ENCODE measurements at regions of chr12 and their contacts with region 1.

Region 1: DNA sequence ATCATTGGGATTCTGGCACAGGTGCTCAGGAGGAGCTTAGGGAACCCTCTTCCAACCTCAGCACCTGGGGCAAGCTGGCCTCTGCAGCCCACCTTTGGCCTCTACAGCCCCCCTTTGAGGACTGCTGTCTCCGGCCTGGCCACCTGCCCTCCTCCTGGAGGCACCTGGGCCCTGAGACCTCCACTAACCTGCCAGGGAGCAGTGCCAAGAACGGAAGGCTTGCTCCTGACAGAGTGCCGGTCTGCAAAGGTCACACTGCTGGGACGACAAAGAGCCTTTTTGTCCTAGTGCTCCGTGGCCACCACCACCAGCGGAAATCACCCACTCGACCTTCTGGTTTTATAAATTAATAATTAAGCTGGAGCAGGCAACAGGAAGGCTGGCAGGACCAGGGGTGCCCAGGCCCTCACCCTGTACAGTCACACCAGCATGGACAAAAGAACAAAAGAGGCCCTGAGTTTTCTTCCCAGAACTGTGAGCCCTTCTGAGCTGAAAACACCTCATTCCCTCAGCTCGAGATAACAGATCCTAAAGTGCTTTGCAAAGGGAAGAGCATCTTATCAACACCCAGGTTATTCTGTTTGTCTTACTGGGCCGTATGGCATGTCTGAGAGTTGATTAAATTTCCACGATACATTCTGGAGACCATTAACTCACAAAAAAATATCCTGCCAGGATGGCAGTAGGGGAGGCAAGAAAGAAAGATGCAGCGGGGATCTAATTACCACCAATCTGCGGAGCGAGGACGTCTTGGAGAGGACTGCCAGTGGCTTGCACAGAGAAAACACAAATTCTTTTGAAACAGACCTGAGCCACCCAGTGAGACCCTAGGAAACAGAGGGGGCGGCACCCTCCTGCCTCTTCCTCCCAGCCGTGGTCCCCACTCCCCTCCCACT is 8.2 kb downstream of the TESC start:
- DNase-seq: peak in 1 of 2 donors; percentile 60
- H3K4me3 ChIP-seq: no peak overlapping the region
- H3K27ac ChIP-seq: peak overlapping the region; percentile 81 to 90
- H3K4me1 ChIP-seq: peaks cover 0 to 15% of the 10 kb centered on the region in 2 donors
- H3K27me3 ChIP-seq: no peaks in the 10 kb centered on the region
- CTCF ChIP-seq: no peak
- POLR2A ChIP-seq: no peak

Region 2: DNA sequence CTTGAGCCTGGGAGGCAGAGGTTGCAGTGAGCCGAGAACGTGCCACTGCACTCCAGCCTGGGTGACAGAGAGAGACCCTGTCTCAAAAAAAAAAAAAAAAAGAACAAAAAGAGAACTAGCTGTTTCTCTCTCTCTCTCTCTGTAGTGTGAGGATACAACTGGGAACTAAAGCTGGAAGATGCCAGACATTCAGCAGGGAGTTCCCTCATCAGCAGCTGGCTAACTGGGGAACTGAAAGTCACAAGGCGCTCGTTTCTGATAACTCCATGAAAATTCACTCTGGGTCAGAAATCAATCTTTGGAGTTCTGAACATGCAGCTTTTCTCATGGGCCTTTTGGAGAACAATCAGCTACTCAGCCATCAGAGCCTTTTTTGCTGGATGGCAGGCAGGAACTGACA is 575.4 kb before region 1 on chr12:
- intact Hi-C with region 1: loop called (anchors 5 kb)
- DNase-seq: no peak
- H3K4me3 ChIP-seq: no peak overlapping the region
- H3K27ac ChIP-seq: no peak overlapping the region
- H3K4me1 ChIP-seq: no peaks in the 10 kb centered on the region
- H3K27me3 ChIP-seq: no peaks in the 10 kb centered on the region
- CTCF ChIP-seq: no peak
- POLR2A ChIP-seq: no peak

Measured in breast epithelium (tissue), 4 donors.